Prostate gland (tissue), 2 donors: ENCODE measurements at regions of chr10 and their contacts with region 1.

Region 1: GRCh38 chr10:103153302-103154197 is 39.5 kb downstream of the NT5C2 start:
- DNase-seq: no peak
- H3K4me3 ChIP-seq: peak overlapping the region in 1 of 2 donors; percentile 0
- H3K27ac ChIP-seq: peak overlapping the region; percentile 72 to 75
- H3K4me1 ChIP-seq: peaks cover 15% of the 10 kb centered on the region
- H3K27me3 ChIP-seq: no peaks in the 10 kb centered on the region
- CTCF ChIP-seq: no peak
- POLR2A ChIP-seq: no peak

Region 2: DNA sequence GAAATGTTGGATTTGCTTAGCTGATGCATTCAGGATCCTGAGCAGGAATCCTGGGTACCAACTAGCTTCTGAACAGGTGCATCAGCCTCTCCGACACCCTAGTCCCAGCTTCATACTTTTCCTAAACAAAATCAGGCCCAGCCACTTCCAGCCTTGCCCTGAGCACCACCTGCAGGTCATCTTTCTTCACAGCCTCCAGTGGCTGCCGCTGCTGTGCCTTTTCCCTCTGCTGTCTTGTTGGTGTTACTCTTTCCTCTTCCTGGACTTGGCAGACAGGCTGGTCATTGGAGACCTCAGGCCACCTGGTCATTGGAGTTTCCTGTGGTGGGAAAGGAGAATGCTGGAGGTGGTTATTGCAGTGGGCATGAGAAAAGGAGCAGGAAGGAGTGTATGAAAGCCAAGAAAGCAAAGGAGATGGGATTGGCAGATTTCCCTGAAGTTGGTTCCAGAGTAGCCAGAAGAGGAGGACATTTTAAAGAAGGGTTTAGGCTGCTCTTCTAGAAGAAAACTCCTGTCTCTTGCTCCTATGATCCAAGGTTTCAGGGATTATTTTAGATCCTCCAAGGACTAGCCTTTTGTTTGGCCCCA is 806.2 kb before region 1 on chr10:
- intact Hi-C with region 1: no loop called
- DNase-seq: peak; percentile 27
- H3K4me3 ChIP-seq: no peak overlapping the region
- H3K27ac ChIP-seq: no peak overlapping the region
- H3K4me1 ChIP-seq: no peaks in the 10 kb centered on the region
- H3K27me3 ChIP-seq: no peaks in the 10 kb centered on the region
- CTCF ChIP-seq: peak in 3 of 4 experiments; percentile 48 to 62 (median 55)
- POLR2A ChIP-seq: no peak

Region 3: DNA sequence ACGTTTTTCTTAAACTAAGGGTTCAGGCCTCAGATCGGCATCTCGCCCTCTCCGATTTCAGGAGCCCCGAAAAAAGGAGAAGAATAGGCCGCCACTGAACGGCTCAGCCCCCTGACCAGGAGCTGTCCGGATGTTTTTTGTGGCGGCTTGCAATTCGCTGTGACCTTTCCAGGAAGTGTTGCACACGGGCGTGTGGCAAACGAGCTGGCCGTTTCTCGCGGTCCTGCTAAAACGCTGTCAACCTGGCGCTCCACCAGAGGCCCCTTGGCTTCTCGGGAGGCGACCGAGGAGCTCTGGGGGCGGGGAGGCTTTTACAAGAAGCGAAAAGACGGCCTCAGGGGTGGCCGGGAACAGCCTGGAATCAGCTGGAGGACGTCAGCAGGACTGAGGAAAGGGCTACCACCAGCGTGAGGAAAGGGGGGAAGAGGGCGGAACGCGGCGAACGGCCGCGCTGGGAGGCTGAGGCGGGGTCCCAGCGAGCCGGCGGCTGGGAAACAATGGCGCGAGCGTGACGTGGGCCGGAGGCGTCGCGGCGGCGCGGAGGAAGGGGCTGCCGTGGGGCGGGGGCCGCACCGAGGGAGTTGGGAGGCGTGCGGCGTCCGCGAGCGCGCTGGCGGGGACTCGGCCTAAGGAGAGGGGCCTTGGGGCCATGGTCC is 39.0 kb after region 1 on chr10:
- intact Hi-C with region 1: loop called (anchors 5 kb)
- DNase-seq: peak; percentile 58
- H3K4me3 ChIP-seq: peak overlapping the region; percentile 99
- H3K27ac ChIP-seq: peak overlapping the region; percentile 96 to 97
- H3K4me1 ChIP-seq: no peaks in the 10 kb centered on the region
- H3K27me3 ChIP-seq: no peaks in the 10 kb centered on the region
- CTCF ChIP-seq: peak in 1 of 4 experiments; percentile 1
- POLR2A ChIP-seq: peak; percentile 21

Region 4: GRCh38 chr10:103396064-103396788 is 242.7 kb after region 1 on chr10 and contains the starts of genes ATP5MK and PDCD11:
- intact Hi-C with region 1: no loop called
- DNase-seq: peak; percentile 98
- H3K4me3 ChIP-seq: peak within 1 kb of the TSS; percentile 51 to 74
- H3K27ac ChIP-seq: peak within 1 kb of the TSS; percentile 61 to 65
- H3K4me1 ChIP-seq: peaks cover 14% of the 10 kb centered on the region
- H3K27me3 ChIP-seq: no peaks in the 10 kb centered on the region
- CTCF ChIP-seq: peak in 2 of 4 experiments; percentile 11 to 16
- POLR2A ChIP-seq: peak; percentile 38
- total RNA-seq, gene ATP5MK: 206 to 234 TPM
- total RNA-seq, gene PDCD11: 13.3 to 33.8 TPM